MCF 10A (cell line): ENCODE measurements at regions of chr12 and their contacts with region 1.

Region 1: DNA sequence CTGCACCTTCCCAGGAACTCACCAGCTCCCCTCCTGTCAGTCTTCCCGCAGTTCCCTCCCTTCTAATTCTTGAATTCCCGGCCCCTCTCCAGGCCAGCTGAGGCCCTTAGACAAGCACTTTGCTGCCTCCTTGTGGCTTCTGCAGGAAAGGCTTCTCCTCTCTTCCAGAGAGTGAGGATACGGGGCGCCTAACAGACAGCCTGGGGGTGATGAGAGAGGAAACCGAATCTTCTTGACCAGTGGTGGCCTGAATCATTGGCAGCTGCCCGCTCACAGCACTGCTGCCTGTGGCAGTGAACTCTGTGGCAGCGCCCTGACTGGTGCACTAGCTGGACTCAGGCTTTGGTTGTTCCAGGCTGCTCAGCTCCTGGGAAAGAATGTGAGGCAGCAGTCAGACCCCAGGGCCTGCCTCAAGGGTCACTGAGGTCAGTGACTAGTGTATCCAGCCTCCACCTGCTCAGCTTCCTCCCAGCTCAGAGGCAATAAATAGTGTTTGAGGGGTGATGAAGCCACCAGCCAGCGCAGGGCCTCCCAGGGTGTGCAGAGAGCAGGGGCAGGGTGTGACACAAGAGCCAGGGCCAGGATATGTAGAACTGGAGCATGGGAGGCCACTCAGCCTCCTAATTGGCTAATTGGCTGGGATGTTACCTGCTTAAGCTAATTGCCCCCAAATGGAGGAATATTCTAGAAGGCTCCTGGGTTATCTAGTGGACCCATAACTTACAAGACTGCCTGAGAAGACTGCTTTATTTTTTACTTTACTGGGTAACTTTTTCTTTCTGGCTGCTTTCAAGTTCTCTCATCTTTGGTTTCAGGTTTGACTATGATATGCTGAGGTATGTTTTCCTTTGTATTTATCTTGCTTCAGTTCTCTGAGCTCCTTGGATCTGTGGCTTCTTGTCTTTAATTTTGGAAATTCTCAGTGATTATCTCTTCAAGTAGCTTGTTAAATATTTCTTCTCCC is 12.9 kb upstream of the MCRS1 start:
- DNase-seq: peak; percentile 86
- H3K4me3 Mint-ChIP-seq: no peak overlapping the region
- H3K27ac Mint-ChIP-seq: no peak overlapping the region
- H3K4me1 Mint-ChIP-seq: peaks cover 6% of the 10 kb centered on the region
- H3K27me3 Mint-ChIP-seq: no peaks in the 10 kb centered on the region
- CTCF ChIP-seq: peak; percentile 75

Region 2: GRCh38 chr12:49553512-49554088 is 27.3 kb before region 1 on chr12:
- CTCF ChIA-PET with region 1: interaction called, 26 read pairs
- POLR2A ChIA-PET with region 1: interaction called, 3 read pairs
- intact Hi-C with region 1: loop called (anchors 2 kb)
- DNase-seq: peak; percentile 65
- H3K4me3 Mint-ChIP-seq: no peak overlapping the region
- H3K27ac Mint-ChIP-seq: no peak overlapping the region
- H3K4me1 Mint-ChIP-seq: peaks cover 13% of the 10 kb centered on the region
- H3K27me3 Mint-ChIP-seq: peaks cover 15% of the 10 kb centered on the region
- CTCF ChIP-seq: peak; percentile 58

Region 3: DNA sequence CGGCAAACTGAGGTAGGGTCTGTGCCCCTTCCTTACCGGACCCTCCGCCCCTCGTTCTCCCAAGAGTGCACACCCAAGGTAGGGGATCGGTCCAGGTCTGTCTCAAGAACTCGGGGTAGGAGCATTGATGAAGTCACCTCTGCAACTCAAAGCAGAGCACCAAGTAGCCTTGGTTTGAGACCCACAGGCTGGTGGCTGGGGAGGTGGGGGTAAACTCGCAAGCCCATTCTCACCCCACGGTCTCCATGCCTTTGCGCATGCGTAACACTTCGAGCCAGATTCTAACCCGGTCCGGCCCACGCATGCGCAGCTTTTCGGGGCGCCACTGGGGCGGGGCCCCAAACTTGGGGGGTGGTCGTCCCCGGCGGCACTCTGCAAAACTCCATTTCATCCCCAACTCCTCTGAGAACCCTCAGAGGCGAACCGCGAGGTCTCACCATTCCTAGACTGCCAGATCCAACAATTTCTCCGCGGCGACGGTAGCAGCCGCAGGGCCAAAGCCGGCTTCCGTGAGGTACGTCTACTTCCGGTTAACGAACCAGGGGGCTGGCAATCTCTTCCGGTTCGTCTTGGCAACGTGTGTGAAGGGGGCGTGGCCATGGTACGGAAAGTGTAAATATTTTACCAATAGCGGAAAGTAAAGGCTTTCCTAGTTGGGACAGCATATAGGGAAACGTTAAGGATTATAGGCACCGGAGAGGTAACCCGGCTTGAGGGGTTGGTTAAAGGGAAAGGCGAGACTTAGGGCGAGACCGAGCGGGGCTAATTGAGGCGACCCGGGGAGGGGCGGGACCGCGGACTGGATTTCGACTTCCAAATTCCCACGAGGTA is 13.0 kb before region 1 on chr12 and contains the start of gene MCRS1:
- CTCF ChIA-PET with region 1: interaction called, 16 read pairs
- POLR2A ChIA-PET with region 1: interaction called, 11 read pairs
- intact Hi-C with region 1: no loop called
- DNase-seq: peak; percentile 92
- H3K4me3 Mint-ChIP-seq: peak within 1 kb of the TSS; percentile 90
- H3K27ac Mint-ChIP-seq: peak within 1 kb of the TSS; percentile 98
- H3K4me1 Mint-ChIP-seq: peaks cover 14% of the 10 kb centered on the region
- H3K27me3 Mint-ChIP-seq: no peaks in the 10 kb centered on the region
- CTCF ChIP-seq: no peak
- total RNA-seq, gene MCRS1: 34.3 and 58.7 TPM in 2 replicates

Region 4: GRCh38 chr12:49621651-49622500 is 41.0 kb after region 1 on chr12:
- CTCF ChIA-PET with region 1: interaction called, 11 read pairs
- POLR2A ChIA-PET with region 1: no interaction called
- intact Hi-C with region 1: no loop called
- DNase-seq: no peak
- H3K4me3 Mint-ChIP-seq: peak overlapping the region; percentile 78
- H3K27ac Mint-ChIP-seq: peak overlapping the region; percentile 85
- H3K4me1 Mint-ChIP-seq: peaks cover 24% of the 10 kb centered on the region
- H3K27me3 Mint-ChIP-seq: no peaks in the 10 kb centered on the region
- CTCF ChIP-seq: no peak